Left colon (tissue), 2 donors: ENCODE measurements at regions of chr11 and their contacts with region 1.

Region 1: GRCh38 chr11:124763156-124763947 is 1.3 kb upstream of the ESAM start:
- DNase-seq: peak; percentile 79 to 97
- ATAC-seq: peak; percentile 55

Region 2: DNA sequence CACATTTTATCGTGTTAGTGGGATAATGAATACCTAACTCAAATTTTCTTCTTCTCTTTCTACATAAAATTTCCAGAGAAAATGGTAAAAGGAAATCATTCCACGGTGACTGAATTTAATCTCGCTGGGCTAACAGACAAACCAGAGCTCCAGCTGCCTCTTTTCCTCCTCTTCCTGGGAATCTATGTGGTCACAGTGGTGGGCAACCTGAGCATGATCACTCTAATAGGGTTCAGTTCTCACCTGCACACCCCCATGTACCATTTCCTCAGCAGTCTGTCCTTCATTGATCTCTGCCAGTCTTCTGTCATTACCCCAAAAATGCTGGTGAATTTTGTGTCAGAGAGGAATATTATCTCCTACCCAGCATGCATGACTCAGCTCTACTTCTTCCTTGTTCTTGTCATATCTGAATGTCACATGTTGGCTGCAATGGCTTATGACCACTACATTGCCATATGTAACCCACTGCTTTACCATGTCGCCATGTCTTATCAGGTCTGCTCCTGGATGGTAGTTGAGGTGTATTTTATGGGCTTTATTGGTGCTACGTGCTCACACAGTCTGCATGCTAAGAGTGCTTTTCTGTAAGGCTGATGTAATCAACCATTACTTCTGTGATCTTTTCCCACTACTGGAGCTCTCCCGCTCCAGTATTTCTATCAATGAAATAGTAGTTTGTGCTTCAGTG is 556.1 kb before region 1 on chr11:
- intact Hi-C with region 1: no loop called
- DNase-seq: no peak
- ATAC-seq: no peak

Region 3: DNA sequence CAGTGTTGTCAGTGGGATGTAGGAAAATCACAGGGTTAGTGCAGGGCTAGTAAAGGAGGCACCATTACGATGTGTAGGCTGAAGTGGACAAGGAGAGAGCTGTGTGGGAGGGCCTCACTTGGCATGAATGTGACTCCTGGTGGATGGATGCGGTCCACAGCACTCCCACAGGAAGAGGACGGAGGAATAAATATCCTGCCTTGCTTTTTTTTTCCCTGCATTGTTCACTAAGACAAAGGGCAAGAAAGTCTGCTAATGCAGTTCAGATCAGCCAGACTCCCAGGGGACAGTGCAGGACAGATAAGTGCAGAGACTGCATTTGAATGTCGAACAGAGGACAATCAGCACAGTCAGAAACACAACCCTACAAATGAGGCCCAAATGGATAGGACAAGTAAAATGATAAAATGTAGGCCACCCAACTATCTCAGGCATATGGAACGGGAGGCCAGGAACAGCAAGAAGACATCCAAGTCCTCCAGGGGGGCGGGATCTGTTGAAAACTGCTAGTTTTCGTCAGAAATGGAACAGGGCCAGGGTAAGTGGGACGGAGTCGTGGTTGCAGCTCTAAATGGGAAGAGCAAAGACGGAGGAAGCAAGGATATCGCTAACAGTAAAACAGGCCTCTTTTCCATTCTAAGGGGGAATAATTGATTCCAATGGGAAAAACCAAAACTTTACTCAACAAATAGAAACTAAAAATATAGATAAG is 292.7 kb before region 1 on chr11:
- intact Hi-C with region 1: no loop called
- DNase-seq: no peak
- ATAC-seq: no peak

Region 4: GRCh38 chr11:124673333-124674167 is 89.8 kb before region 1 on chr11 and contains the starts of genes SIAE and SPA17:
- intact Hi-C with region 1: loop called (anchors 2 to 10 kb)
- DNase-seq: peak; percentile 95 to 96
- ATAC-seq: peak; percentile 93
- total RNA-seq, gene SIAE: 207 to 293 TPM
- total RNA-seq, gene SPA17: 7.4 to 8.7 TPM

Region 5: DNA sequence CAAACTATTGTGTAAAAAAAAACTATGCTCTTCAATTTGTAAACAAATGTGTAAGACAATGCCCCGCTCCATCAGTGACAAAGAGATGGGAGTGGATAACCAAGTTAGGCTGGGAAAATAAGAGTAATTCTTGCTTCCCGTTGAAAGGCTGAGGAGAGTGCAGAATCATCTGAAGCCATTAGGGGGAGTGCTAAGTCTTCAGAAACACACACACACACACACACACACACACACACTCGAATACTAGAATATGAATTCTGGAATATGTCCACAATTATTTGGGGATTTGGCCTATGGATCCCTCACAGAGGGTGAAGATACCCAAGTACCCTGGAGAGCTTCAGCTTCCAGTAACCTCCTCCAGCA is 74.1 kb after region 1 on chr11:
- intact Hi-C with region 1: loop called in 1 of 2 experiments (anchors 10 kb)
- DNase-seq: no peak
- ATAC-seq: peak; percentile 55